ENCODE measurements at regions of chr1 and their contacts with region 1.

Region 1: DNA sequence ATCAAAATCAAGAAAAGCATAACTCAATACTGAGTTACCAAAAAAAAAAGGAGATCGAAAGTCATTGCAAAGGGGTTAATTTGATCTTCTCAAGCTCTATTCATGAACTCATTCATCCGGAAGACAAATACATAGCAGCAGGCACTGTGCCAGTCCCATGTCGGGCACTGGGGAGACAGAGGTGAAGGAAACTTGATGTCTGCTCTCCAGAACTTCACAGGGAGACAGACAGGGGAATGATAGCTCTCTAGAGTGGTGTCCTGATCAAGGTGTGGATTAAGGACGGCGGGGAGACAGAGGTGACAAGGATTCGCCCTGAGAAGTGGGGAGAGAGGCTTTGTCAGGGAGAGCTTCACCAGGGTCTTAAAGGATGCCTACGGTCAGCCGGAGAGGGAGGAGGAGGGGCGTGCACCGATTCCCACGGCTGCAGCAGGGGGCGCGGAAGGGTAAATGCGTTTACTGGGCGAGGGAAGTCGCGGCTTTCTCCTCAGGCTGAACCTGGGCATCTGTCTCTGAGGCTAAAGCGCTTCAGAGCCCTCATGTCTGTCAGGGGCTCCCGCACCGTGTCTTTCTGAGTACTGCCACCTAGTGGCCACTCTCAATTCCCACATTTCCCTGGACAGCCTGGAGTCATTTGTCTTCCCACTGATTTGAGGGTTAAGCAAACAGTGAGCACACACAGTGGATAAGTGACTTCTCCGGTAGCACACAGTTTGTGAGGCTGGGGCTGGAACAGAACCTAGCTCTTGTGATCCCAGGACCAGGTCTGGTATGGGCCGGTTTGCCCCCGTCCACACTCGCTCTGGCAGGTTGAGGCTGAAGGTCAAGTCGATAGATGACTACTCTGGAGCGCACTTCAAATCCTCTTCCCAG is 152.8 kb downstream of the TENT5C start:
- DNase-seq: peak; percentile 82
- H3K4me3 ChIP-seq: peak overlapping the region; percentile 27
- H3K27ac ChIP-seq: no peak overlapping the region
- H3K4me1 ChIP-seq: no peaks in the 10 kb centered on the region
- H3K27me3 ChIP-seq: no peaks in the 10 kb centered on the region
- CTCF ChIP-seq: peak; percentile 90

Region 2: GRCh38 chr1:117512743-117513321 is 245.8 kb before region 1 on chr1:
- intact Hi-C with region 1: loop called (anchors 2 kb)
- DNase-seq: no peak
- H3K4me3 ChIP-seq: no peak overlapping the region
- H3K27ac ChIP-seq: no peak overlapping the region
- H3K4me1 ChIP-seq: no peaks in the 10 kb centered on the region
- H3K27me3 ChIP-seq: no peaks in the 10 kb centered on the region
- CTCF ChIP-seq: peak; percentile 34

Region 3: DNA sequence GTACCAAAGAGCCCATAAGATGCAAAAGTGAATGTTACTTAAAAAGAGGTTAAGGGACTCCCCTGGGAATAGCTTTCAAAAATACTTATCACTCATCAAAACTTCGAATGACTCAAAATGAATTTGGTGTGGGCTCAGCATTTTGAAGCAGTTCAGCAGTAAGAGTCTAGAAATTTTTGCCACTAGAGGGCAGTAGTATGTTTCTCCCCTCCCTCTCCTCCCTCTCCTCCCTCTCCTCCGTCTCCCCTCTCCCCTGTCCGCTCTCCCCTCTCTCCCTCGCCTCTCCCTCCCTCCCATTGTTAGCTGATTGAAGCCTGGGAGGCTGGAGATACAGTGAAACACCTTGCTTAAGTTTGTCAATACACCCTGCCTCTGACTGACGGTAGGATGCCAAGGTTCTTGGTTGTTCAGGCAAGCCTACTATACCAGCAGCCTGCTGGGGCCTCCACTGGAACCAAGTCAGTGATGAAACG is 223.6 kb before region 1 on chr1:
- intact Hi-C with region 1: loop called (anchors 2 kb)
- DNase-seq: peak; percentile 43
- H3K4me3 ChIP-seq: no peak overlapping the region
- H3K27ac ChIP-seq: no peak overlapping the region
- H3K4me1 ChIP-seq: no peaks in the 10 kb centered on the region
- H3K27me3 ChIP-seq: no peaks in the 10 kb centered on the region
- CTCF ChIP-seq: peak; percentile 54

Region 4: GRCh38 chr1:117612517-117613248 is 146.0 kb before region 1 on chr1:
- intact Hi-C with region 1: loop called (anchors 10 kb)
- DNase-seq: peak; percentile 65
- H3K4me3 ChIP-seq: no peak overlapping the region
- H3K27ac ChIP-seq: peak overlapping the region; percentile 75
- H3K4me1 ChIP-seq: peaks cover 25% of the 10 kb centered on the region
- H3K27me3 ChIP-seq: no peaks in the 10 kb centered on the region
- CTCF ChIP-seq: no peak

Region 5: DNA sequence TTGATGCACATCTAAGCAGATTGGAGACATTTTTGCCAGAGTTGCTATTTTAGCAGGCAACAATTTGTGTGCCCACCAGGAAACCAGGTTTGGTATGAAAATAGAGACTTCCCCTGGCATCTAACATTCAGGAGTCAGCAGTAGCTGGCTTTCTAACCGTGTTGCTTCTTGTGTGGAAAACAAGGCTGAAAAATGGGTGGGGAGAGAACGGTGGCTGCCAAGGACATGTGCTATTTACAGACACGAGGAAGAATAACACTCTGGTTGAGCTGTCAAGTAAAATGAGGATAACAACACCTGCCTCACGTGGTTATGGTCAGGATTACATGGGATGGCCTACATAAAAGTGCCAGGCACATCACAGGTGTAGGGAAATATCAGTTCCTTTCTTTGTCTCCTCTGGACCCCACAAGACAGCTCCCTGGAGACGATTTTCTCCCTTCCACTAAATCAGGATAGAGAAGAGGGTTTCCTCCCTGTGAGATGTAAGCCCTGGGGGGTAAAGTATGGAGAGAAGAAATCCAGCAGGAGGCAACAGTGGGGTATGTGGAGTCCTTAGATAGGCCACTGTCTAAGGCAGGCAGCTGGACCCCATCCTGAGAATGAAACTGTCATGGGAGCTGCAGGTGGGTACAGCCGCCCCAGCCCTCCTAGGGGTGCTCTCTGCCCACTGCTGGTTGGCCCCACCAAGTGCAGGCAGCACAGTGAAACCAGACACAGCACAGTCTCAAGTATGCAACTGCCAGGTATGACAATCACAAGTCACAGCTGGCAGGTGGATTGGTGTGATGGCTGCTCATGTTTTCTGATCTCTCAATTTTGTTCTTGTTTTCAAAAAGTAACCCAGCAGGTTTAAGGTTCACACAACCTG is 72.5 kb before region 1 on chr1:
- intact Hi-C with region 1: loop called (anchors 5 kb)
- DNase-seq: no peak
- H3K4me3 ChIP-seq: no peak overlapping the region
- H3K27ac ChIP-seq: no peak overlapping the region
- H3K4me1 ChIP-seq: no peaks in the 10 kb centered on the region
- H3K27me3 ChIP-seq: no peaks in the 10 kb centered on the region
- CTCF ChIP-seq: no peak

Region 6: DNA sequence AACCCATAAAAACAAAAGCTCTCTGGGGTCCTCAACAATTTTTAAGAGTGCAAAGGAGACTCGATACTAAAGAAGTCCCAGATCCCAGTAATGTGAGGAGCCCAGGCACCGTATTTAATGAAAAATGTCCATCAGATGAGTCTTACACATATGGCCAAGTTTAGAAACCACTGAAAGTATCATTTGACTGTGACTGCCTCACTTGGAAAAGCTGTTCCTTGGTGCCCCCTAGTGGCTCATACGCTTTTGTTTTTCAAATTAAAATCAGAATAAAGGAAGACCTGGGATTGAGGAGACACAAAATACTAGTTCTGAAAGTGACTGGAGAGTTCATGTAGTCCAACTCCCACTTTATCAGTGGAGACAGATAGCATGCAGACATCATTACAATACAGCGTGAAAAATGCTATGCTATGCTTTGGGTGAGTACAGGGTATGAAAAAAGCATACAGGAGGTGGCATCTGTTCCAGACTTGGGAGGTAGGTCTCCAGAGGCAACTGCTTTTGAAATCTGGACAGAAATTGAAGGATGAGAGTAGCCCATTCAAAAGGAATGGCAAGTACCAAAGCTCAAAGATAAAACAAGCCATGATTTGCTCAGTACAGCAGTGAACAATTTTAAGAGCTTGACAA is 136.9 kb after region 1 on chr1:
- intact Hi-C with region 1: loop called (anchors 5 kb)
- DNase-seq: peak; percentile 75
- H3K4me3 ChIP-seq: no peak overlapping the region
- H3K27ac ChIP-seq: no peak overlapping the region
- H3K4me1 ChIP-seq: no peaks in the 10 kb centered on the region
- H3K27me3 ChIP-seq: no peaks in the 10 kb centered on the region
- CTCF ChIP-seq: peak; percentile 68

Region 7: DNA sequence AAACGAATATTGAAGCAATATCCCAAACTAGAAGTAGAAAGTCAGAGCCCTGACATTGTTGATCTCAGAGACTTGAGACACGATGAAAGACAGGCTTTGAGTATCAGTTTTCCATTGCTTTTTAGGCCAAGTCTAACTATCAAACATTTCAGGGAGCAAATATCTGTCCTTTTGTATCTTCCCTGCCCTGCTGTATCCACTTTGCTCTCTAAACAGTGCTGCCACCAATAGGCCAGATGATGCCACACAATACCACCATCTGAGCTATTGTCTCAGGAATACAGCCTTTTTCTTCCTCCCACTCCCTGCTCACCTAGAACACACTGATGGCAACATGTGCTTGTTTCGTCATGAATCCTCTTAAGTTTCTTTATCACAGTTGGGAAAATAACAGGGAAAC is 488.9 kb after region 1 on chr1:
- intact Hi-C with region 1: no loop called
- DNase-seq: no peak
- H3K4me3 ChIP-seq: no peak overlapping the region
- H3K27ac ChIP-seq: no peak overlapping the region
- H3K4me1 ChIP-seq: no peaks in the 10 kb centered on the region
- H3K27me3 ChIP-seq: no peaks in the 10 kb centered on the region
- CTCF ChIP-seq: peak; percentile 16

Measured in colonic mucosa (tissue), 4 donors.